Heart left ventricle (tissue), 16 donors: ENCODE measurements at regions of chr5 and their contacts with region 1.

Region 1: GRCh38 chr5:14190194-14191164 is 47.3 kb downstream of the TRIO start:
- DNase-seq: no peak
- ATAC-seq: peak; percentile 47 to 86 (median 74)
- H3K4me3 ChIP-seq: peak overlapping the region in 4 of 12 donors; percentile 3 to 23 (median 10)
- H3K27ac ChIP-seq: peak overlapping the region in 11 of 12 donors; percentile 10 to 90 (median 56)
- H3K4me1 ChIP-seq: peaks cover 13 to 81% (median 53%) of the 10 kb centered on the region in 12 donors
- H3K27me3 ChIP-seq: no peaks in the 10 kb centered on the region
- CTCF ChIP-seq: no peak
- POLR2A ChIP-seq: no peak

Region 2: DNA sequence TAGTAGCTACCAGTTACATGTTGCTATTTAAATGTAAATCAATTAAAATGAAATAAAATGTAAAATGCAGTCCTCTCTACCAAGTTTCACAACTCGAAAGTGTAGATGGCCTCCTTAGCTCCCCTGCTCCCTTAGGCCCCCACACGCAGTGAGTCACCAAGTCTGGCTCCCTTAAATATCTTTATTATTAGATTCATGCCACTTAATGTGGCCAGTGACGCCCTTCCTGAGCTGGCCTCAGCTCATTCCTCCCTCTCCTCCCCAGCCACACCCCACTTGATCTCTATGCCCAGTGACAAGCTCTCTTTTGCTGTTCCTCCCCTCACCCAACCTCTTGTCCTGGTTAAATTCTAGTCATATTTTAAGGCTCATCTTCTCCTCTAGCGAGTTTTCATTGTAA is 157.5 kb before region 1 on chr5:
- intact Hi-C with region 1: no loop called
- DNase-seq: no peak
- ATAC-seq: no peak
- H3K4me3 ChIP-seq: no peak overlapping the region
- H3K27ac ChIP-seq: no peak overlapping the region
- H3K4me1 ChIP-seq: peaks cover 3 to 28% (median 22%) of the 10 kb centered on the region in 12 donors
- H3K27me3 ChIP-seq: no peaks in the 10 kb centered on the region
- CTCF ChIP-seq: no peak
- POLR2A ChIP-seq: no peak

Region 3: DNA sequence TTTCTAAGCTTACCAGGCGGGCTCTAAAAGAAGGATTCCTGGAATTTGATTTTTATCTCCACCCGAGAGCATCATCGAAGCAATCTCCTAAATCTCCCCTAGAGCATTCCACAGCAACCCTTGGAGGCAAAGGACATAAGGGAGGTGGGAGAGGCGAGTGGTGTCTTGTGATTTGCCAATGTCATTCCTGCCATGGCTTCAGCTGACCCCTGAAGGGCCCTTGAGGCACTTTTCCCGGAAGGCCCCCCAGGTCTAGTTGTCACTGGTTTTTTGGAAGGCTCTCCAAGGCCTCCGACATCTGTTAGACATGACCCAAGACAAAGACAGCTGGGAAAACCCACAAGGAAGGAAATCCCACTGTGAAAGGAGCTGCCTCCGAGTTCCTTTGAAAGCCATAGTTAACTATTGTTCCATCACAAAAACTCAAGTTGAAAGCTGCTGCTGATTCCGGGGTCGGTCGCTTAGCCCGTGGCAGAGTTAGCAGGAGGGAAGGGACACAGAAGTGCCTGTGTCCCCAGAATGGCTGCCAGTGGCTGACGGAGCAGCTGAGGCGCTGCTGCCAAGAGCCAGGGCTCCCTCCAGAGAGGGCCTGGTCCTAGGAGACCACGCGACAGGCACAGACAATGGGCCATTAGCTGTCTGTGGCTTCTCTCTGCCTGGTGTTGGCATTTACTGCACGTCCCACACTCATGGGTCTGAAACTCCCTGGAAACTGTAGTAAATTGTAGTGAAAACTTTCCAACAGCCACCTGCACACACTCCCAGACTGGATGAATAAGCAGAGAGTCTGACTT is 71.8 kb before region 1 on chr5:
- intact Hi-C with region 1: no loop called
- DNase-seq: peak; percentile 32 to 61 (median 57)
- ATAC-seq: peak; percentile 80 to 91 (median 84)
- H3K4me3 ChIP-seq: no peak overlapping the region
- H3K27ac ChIP-seq: peak overlapping the region in 10 of 12 donors; percentile 20 to 69 (median 40)
- H3K4me1 ChIP-seq: peaks cover 0 to 29% (median 13%) of the 10 kb centered on the region in 12 donors
- H3K27me3 ChIP-seq: no peaks in the 10 kb centered on the region
- CTCF ChIP-seq: no peak
- POLR2A ChIP-seq: no peak

Region 4: DNA sequence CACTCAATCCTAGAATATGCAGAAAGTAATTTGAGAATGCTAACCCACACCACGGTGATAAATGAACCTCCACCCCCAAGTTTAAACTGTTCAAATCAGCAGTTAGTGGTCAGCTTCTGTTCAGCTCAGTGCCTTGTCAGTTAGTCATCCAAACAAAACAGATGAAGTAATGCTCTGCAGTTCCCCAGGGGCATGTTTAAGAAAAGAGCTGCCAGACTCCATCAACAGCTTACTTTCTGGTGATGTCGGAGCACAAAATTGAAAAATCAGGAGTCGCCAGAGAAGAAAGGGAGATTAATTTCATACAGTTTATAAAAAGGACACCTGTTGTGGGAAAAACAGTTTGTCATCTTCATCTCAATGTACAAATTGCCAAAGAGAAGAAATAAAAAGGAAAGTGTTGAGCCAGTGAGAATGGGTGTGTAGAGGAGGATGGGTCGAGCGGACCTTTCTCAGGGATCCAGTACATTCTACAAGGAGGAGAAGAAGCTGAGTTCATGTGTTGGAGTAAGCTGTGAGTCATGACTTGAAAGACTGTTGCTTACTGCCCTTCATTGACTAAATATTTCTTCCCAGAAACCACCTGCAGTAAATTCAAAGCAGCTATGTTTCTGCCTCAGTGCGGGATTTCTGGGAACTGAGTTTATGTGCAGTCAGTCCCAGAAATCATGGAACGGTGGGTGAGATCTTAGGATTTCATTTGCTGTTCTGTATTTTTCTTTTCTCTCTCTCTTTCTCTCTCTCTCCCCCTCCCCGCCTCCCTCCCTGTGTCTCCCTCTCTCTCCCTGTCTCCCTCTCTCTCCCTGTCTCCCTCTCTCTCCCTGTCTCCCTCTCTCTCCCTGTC is 33.6 kb before region 1 on chr5:
- intact Hi-C with region 1: loop called in 1 of 10 experiments (anchors 5 kb)
- DNase-seq: peak in 2 of 5 donors; percentile 56 to 57
- ATAC-seq: peak; percentile 43 to 82 (median 74)
- H3K4me3 ChIP-seq: peak overlapping the region in 8 of 12 donors; percentile 18 to 45 (median 30)
- H3K27ac ChIP-seq: peak overlapping the region in 9 of 12 donors; percentile 17 to 87 (median 51)
- H3K4me1 ChIP-seq: peaks cover 25 to 76% (median 68%) of the 10 kb centered on the region in 12 donors
- H3K27me3 ChIP-seq: no peaks in the 10 kb centered on the region
- CTCF ChIP-seq: no peak
- POLR2A ChIP-seq: no peak